Endothelial cell of umbilical vein (primary cell): ENCODE measurements at regions of chr13 and their contacts with region 1.

Region 1: GRCh38 chr13:102141625-102142472 is 260.0 kb downstream of the FGF14 start:
- DNase-seq: peak; percentile 25
- H3K4me3 ChIP-seq: no peak overlapping the region
- H3K27ac ChIP-seq: no peak overlapping the region
- H3K4me1 ChIP-seq: no peaks in the 10 kb centered on the region
- H3K27me3 ChIP-seq: peaks cover 0 to 2% of the 10 kb centered on the region in 2 experiments
- CTCF ChIP-seq: peak; percentile 48 to 51
- POLR2A ChIP-seq: no peak

Region 2: GRCh38 chr13:101935828-101936227 is 206.0 kb before region 1 on chr13:
- CTCF ChIA-PET with region 1: no interaction called
- POLR2A ChIA-PET with region 1: no interaction called
- dilution Hi-C with region 1: no loop called
- intact Hi-C with region 1: no loop called
- DNase-seq: no peak
- H3K4me3 ChIP-seq: no peak overlapping the region
- H3K27ac ChIP-seq: no peak overlapping the region
- H3K4me1 ChIP-seq: no peaks in the 10 kb centered on the region
- H3K27me3 ChIP-seq: no peaks in the 10 kb centered on the region
- CTCF ChIP-seq: no peak
- POLR2A ChIP-seq: no peak

Region 3: DNA sequence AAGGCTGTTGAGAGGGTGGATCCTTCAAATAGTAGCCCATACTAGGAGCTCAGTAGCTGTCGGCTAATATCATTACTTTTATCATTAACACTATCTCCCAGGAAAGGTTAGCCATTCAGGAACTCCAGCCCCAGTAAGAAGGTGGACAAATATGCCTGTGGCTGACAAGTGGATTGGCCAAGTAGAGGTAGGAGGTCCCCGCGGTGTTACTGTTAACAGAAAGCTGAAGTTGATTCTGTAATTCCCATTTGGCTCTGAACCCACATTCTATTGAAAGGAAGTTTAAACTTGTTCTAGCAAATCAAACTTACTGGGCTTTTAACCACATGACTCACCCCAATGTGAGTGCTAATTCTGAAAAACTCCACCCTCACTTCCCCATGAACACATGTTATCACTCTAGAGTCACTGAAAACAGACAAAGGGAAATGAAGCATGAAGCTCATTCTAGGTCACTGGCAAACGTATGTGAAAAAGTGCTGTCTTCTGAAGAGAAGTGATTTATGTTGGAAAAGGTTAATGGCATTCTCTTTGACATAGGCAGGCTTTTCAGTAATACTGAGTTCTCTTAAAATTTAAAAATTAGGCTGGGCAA is 13.5 kb before region 1 on chr13:
- CTCF ChIA-PET with region 1: interaction called, 10 read pairs
- POLR2A ChIA-PET with region 1: no interaction called
- dilution Hi-C with region 1: no loop called
- intact Hi-C with region 1: no loop called
- DNase-seq: no peak
- H3K4me3 ChIP-seq: no peak overlapping the region
- H3K27ac ChIP-seq: no peak overlapping the region
- H3K4me1 ChIP-seq: no peaks in the 10 kb centered on the region
- H3K27me3 ChIP-seq: peaks cover 0 to 3% of the 10 kb centered on the region in 2 experiments
- CTCF ChIP-seq: no peak
- POLR2A ChIP-seq: no peak

Region 4: DNA sequence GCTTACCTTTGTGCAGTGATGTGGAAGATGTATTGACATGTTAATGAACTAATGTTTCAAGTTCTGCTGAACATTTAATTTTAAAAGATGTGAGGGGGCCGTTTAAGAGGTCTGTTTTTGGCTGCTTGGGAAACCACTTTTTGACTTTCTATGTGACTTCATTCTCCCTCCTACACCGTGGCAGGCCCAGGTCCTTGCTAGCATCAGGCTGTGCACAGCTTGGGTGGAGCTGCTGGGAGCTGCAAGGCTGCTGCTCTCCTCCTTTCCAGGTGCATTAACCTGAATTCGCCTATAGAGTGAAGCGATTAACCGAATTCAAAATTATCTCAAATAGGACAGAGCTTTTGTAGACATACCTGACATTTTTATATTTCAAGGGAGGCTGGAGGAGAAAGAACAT is 10.9 kb after region 1 on chr13:
- CTCF ChIA-PET with region 1: interaction called, 13 read pairs
- POLR2A ChIA-PET with region 1: no interaction called
- dilution Hi-C with region 1: no loop called
- intact Hi-C with region 1: no loop called
- DNase-seq: no peak
- H3K4me3 ChIP-seq: no peak overlapping the region
- H3K27ac ChIP-seq: no peak overlapping the region
- H3K4me1 ChIP-seq: no peaks in the 10 kb centered on the region
- H3K27me3 ChIP-seq: no peaks in the 10 kb centered on the region
- CTCF ChIP-seq: no peak
- POLR2A ChIP-seq: no peak

Region 5: GRCh38 chr13:102376318-102376717 is 234.5 kb after region 1 on chr13:
- CTCF ChIA-PET with region 1: no interaction called
- POLR2A ChIA-PET with region 1: no interaction called
- dilution Hi-C with region 1: no loop called
- intact Hi-C with region 1: loop called (anchors 10 kb)
- DNase-seq: no peak
- H3K4me3 ChIP-seq: no peak overlapping the region
- H3K27ac ChIP-seq: no peak overlapping the region
- H3K4me1 ChIP-seq: no peaks in the 10 kb centered on the region
- H3K27me3 ChIP-seq: no peaks in the 10 kb centered on the region
- CTCF ChIP-seq: no peak
- POLR2A ChIP-seq: no peak

Region 6: GRCh38 chr13:102460801-102461200 is 319.0 kb after region 1 on chr13:
- CTCF ChIA-PET with region 1: interaction called, 23 read pairs
- POLR2A ChIA-PET with region 1: no interaction called
- dilution Hi-C with region 1: no loop called
- intact Hi-C with region 1: loop called (anchors 1 kb)
- DNase-seq: no peak
- H3K4me3 ChIP-seq: no peak overlapping the region
- H3K27ac ChIP-seq: no peak overlapping the region
- H3K4me1 ChIP-seq: no peaks in the 10 kb centered on the region
- H3K27me3 ChIP-seq: no peaks in the 10 kb centered on the region
- CTCF ChIP-seq: no peak
- POLR2A ChIP-seq: no peak